CD8-positive, alpha-beta T cell (primary cell): ENCODE measurements at regions of chr10 and their contacts with region 1.

Region 1: GRCh38 chr10:73819513-73820093 is 8.2 kb upstream of the NDST2 start:
- DNase-seq: no peak
- ATAC-seq: no peak
- H3K4me3 ChIP-seq: no peak overlapping the region
- H3K4me3 Mint-ChIP-seq: no peak overlapping the region
- H3K27ac ChIP-seq: no peak overlapping the region
- H3K27ac Mint-ChIP-seq: no peak overlapping the region
- H3K4me1 ChIP-seq: no peaks in the 10 kb centered on the region
- H3K4me1 Mint-ChIP-seq: no peaks in the 10 kb centered on the region
- H3K27me3 ChIP-seq: no peaks in the 10 kb centered on the region
- H3K27me3 Mint-ChIP-seq: no peaks in the 10 kb centered on the region
- CTCF ChIP-seq: no peak

Region 2: GRCh38 chr10:73182568-73182967 is 637.0 kb before region 1 on chr10:
- CTCF ChIA-PET with region 1: no interaction called
- POLR2A ChIA-PET with region 1: no interaction called
- intact Hi-C with region 1: loop called in 1 of 2 experiments (anchors 5 kb)
- DNase-seq: no peak
- ATAC-seq: no peak
- H3K4me3 ChIP-seq: no peak overlapping the region
- H3K4me3 Mint-ChIP-seq: no peak overlapping the region
- H3K27ac ChIP-seq: no peak overlapping the region
- H3K27ac Mint-ChIP-seq: no peak overlapping the region
- H3K4me1 ChIP-seq: no peaks in the 10 kb centered on the region
- H3K4me1 Mint-ChIP-seq: no peaks in the 10 kb centered on the region
- H3K27me3 ChIP-seq: no peaks in the 10 kb centered on the region
- H3K27me3 Mint-ChIP-seq: no peaks in the 10 kb centered on the region
- CTCF ChIP-seq: no peak

Region 3: DNA sequence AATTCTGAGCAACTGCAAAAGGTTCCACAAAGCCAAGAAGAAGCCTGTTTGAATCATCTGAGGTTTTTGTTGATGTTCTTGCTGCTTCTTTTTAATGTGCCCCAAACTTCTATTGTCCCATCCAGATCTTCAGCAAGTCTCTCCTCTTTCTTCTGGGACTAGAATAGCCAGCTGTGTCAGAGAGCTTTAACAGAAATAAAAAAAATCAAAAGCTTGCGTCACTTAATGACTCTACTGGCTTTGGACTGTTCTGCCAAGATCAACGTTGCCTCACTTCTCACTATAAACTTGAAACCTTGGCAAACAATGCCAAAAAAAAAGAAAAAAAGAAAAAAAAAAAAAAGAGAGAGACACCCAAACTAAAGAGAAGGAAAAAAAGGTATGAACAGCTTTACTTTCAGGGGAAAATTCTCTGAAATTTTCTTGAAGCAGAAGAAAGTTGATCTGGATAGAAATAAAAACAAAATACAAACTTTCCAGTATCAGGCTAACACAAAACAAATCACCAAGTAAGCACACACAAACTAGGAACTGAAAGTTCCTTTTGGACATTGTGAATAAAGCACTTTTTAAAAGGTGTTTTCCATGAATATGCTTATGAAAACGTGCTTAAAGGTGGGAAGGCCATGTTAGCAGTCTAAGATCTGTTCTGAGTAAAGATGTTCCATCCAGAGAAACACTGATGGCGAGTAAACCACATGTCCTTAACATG is 243.3 kb before region 1 on chr10:
- CTCF ChIA-PET with region 1: no interaction called
- POLR2A ChIA-PET with region 1: no interaction called
- intact Hi-C with region 1: no loop called
- DNase-seq: no peak
- ATAC-seq: no peak
- H3K4me3 ChIP-seq: no peak overlapping the region
- H3K4me3 Mint-ChIP-seq: no peak overlapping the region
- H3K27ac ChIP-seq: no peak overlapping the region
- H3K27ac Mint-ChIP-seq: no peak overlapping the region
- H3K4me1 ChIP-seq: no peaks in the 10 kb centered on the region
- H3K4me1 Mint-ChIP-seq: no peaks in the 10 kb centered on the region
- H3K27me3 ChIP-seq: no peaks in the 10 kb centered on the region
- H3K27me3 Mint-ChIP-seq: no peaks in the 10 kb centered on the region
- CTCF ChIP-seq: no peak